ENCODE measurements at regions of chr1 and their contacts with region 1.

Region 1: DNA sequence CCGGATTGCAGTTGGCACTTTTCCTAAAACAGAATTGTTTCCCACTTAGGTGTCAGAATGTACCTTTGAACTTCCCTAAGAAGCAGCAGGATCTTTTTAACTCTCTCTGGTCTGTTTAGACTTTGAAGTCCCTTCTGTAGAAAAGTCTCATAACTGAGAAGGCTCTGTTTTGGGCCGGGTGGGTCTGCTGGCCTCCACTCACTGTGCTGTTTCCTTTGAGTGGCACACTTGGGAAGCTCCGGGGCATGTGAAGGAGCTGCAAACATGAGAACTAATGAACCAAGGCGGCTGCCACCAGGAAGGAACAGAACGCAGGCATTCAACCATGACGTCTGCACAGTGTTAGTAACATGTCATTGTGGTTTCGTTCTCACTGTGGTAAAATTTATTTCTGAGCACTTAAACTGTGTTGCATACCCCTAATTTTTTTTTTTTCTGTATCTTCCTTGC is 19.5 kb upstream of the NCMAP start:
- DNase-seq: peak; percentile 75
- H3K4me3 Mint-ChIP-seq: peak overlapping the region; percentile 73
- H3K27ac Mint-ChIP-seq: peak overlapping the region; percentile 98
- H3K4me1 Mint-ChIP-seq: peaks cover 74% of the 10 kb centered on the region
- H3K27me3 Mint-ChIP-seq: no peaks in the 10 kb centered on the region

Region 2: GRCh38 chr1:24642481-24643361 is 106.3 kb after region 1 on chr1 and contains the start of gene SRRM1:
- CTCF ChIA-PET with region 1: interaction called, 11 read pairs
- POLR2A ChIA-PET with region 1: interaction called, 15 read pairs
- DNase-seq: peak; percentile 99
- H3K4me3 Mint-ChIP-seq: peak within 1 kb of the TSS; percentile 88
- H3K27ac Mint-ChIP-seq: peak within 1 kb of the TSS; percentile 96
- H3K4me1 Mint-ChIP-seq: peaks cover 48% of the 10 kb centered on the region
- H3K27me3 Mint-ChIP-seq: peaks cover under 1% of the 10 kb centered on the region
- total RNA-seq, gene SRRM1: 172 to 183 TPM

Region 3: GRCh38 chr1:24822887-24823286 is 286.5 kb after region 1 on chr1:
- CTCF ChIA-PET with region 1: no interaction called
- POLR2A ChIA-PET with region 1: no interaction called
- DNase-seq: no peak
- H3K4me3 Mint-ChIP-seq: no peak overlapping the region
- H3K27ac Mint-ChIP-seq: no peak overlapping the region
- H3K4me1 Mint-ChIP-seq: peaks cover under 1% of the 10 kb centered on the region
- H3K27me3 Mint-ChIP-seq: peaks cover 2% of the 10 kb centered on the region

Measured in activated CD4-positive, alpha-beta memory T cell treated with anti-CD3 and anti-CD28 coated beads, Interleukin-2, amount 10 ng/mL, durations not matched to agents 7 days and 5 days (primary cell).